Tibial artery (tissue), 4 donors: ENCODE measurements at regions of chr2 and their contacts with region 1.

Region 1: DNA sequence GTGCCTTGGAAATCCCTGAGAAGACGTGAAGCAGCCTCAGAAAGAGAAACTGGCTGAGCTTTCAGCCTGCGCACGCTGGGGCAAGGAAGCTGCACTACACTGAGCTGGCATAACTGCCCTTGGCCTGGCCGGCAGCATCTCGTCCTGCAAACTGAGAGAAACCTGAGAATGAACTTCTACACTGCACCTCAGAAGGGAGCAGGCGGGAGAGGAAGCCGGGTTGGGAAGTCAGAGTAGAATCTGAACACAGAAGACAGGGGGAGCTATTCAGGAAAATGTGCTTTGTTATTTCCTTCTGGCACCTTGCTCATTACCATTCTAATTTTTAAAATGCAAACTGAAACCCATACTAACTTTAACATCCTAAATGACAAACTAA is 70.9 kb downstream of the ZEB2 start:
- DNase-seq: peak in 1 of 2 donors; percentile 73
- H3K4me3 ChIP-seq: peak overlapping the region; percentile 38 to 41
- H3K27ac ChIP-seq: peak overlapping the region; percentile 46 to 74
- H3K4me1 ChIP-seq: peaks cover 0 to 98% (median 24%) of the 10 kb centered on the region in 4 donors
- H3K27me3 ChIP-seq: no peaks in the 10 kb centered on the region
- CTCF ChIP-seq: peak; percentile 36 to 48

Region 2: GRCh38 chr2:144357623-144358373 is 91.2 kb before region 1 on chr2:
- intact Hi-C with region 1: loop called (anchors 10 kb)
- DNase-seq: no peak
- H3K4me3 ChIP-seq: no peak overlapping the region
- H3K27ac ChIP-seq: peak overlapping the region; percentile 52 to 57
- H3K4me1 ChIP-seq: peaks cover 0 to 36% (median 8%) of the 10 kb centered on the region in 4 donors
- H3K27me3 ChIP-seq: no peaks in the 10 kb centered on the region
- CTCF ChIP-seq: no peak

Region 3: GRCh38 chr2:144504218-144504641 is 55.2 kb after region 1 on chr2:
- intact Hi-C with region 1: loop called (anchors 5 kb)
- DNase-seq: no peak
- H3K4me3 ChIP-seq: peak overlapping the region; percentile 4 to 8
- H3K27ac ChIP-seq: peak overlapping the region; percentile 97 to 99
- H3K4me1 ChIP-seq: peaks cover 0 to 83% (median 36%) of the 10 kb centered on the region in 4 donors
- H3K27me3 ChIP-seq: no peaks in the 10 kb centered on the region
- CTCF ChIP-seq: no peak

Region 4: GRCh38 chr2:144914622-144915318 is 465.8 kb after region 1 on chr2:
- intact Hi-C with region 1: no loop called
- DNase-seq: no peak
- H3K4me3 ChIP-seq: no peak overlapping the region
- H3K27ac ChIP-seq: no peak overlapping the region
- H3K4me1 ChIP-seq: no peaks in the 10 kb centered on the region
- H3K27me3 ChIP-seq: no peaks in the 10 kb centered on the region
- CTCF ChIP-seq: no peak